Activated B cell treated with CpG ODN at 0.5 μM for 24 hours (primary cell): ENCODE measurements at regions of chr5 and their contacts with region 1.

Region 1: GRCh38 chr5:40486437-40487275 is 193.1 kb upstream of the PTGER4 start:
- DNase-seq: no peak
- ATAC-seq: peak; percentile 38
- H3K4me3 Mint-ChIP-seq: peak overlapping the region; percentile 64
- H3K27ac Mint-ChIP-seq: peak overlapping the region; percentile 87
- H3K4me1 Mint-ChIP-seq: peaks cover 82% of the 10 kb centered on the region
- H3K27me3 Mint-ChIP-seq: no peaks in the 10 kb centered on the region
- CTCF ChIP-seq: no peak

Region 2: GRCh38 chr5:39948867-39949468 is 537.7 kb before region 1 on chr5:
- CTCF ChIA-PET with region 1: no interaction called
- POLR2A ChIA-PET with region 1: no interaction called
- intact Hi-C with region 1: loop called (anchors 5 kb)
- DNase-seq: no peak
- ATAC-seq: peak; percentile 83
- H3K4me3 Mint-ChIP-seq: no peak overlapping the region
- H3K27ac Mint-ChIP-seq: no peak overlapping the region
- H3K4me1 Mint-ChIP-seq: peaks cover 3% of the 10 kb centered on the region
- H3K27me3 Mint-ChIP-seq: no peaks in the 10 kb centered on the region
- CTCF ChIP-seq: no peak

Region 3: GRCh38 chr5:40223884-40224402 is 262.7 kb before region 1 on chr5:
- CTCF ChIA-PET with region 1: no interaction called
- POLR2A ChIA-PET with region 1: interaction called, 3 read pairs
- intact Hi-C with region 1: loop called (anchors 1 kb)
- DNase-seq: no peak
- ATAC-seq: peak; percentile 63
- H3K4me3 Mint-ChIP-seq: peak overlapping the region; percentile 21
- H3K27ac Mint-ChIP-seq: peak overlapping the region; percentile 79
- H3K4me1 Mint-ChIP-seq: peaks cover 45% of the 10 kb centered on the region
- H3K27me3 Mint-ChIP-seq: peaks cover 5% of the 10 kb centered on the region
- CTCF ChIP-seq: no peak

Region 4: GRCh38 chr5:40367255-40367654 is 119.4 kb before region 1 on chr5:
- CTCF ChIA-PET with region 1: no interaction called
- POLR2A ChIA-PET with region 1: no interaction called
- intact Hi-C with region 1: loop called (anchors 1 kb)
- DNase-seq: no peak
- ATAC-seq: peak; percentile 45
- H3K4me3 Mint-ChIP-seq: no peak overlapping the region
- H3K27ac Mint-ChIP-seq: no peak overlapping the region
- H3K4me1 Mint-ChIP-seq: peaks cover 13% of the 10 kb centered on the region
- H3K27me3 Mint-ChIP-seq: no peaks in the 10 kb centered on the region
- CTCF ChIP-seq: no peak

Region 5: GRCh38 chr5:40410231-40410861 is 76.3 kb before region 1 on chr5:
- CTCF ChIA-PET with region 1: interaction called, 3 read pairs
- POLR2A ChIA-PET with region 1: no interaction called
- intact Hi-C with region 1: loop called (anchors 2 kb)
- DNase-seq: no peak
- ATAC-seq: peak; percentile 69
- H3K4me3 Mint-ChIP-seq: peak overlapping the region; percentile 51
- H3K27ac Mint-ChIP-seq: peak overlapping the region; percentile 78
- H3K4me1 Mint-ChIP-seq: peaks cover 44% of the 10 kb centered on the region
- H3K27me3 Mint-ChIP-seq: no peaks in the 10 kb centered on the region
- CTCF ChIP-seq: no peak

Region 6: GRCh38 chr5:40446910-40447309 is 39.7 kb before region 1 on chr5:
- CTCF ChIA-PET with region 1: no interaction called
- POLR2A ChIA-PET with region 1: no interaction called
- intact Hi-C with region 1: no loop called
- DNase-seq: no peak
- ATAC-seq: peak; percentile 21
- H3K4me3 Mint-ChIP-seq: no peak overlapping the region
- H3K27ac Mint-ChIP-seq: no peak overlapping the region
- H3K4me1 Mint-ChIP-seq: peaks cover 8% of the 10 kb centered on the region
- H3K27me3 Mint-ChIP-seq: no peaks in the 10 kb centered on the region
- CTCF ChIP-seq: no peak

Region 7: DNA sequence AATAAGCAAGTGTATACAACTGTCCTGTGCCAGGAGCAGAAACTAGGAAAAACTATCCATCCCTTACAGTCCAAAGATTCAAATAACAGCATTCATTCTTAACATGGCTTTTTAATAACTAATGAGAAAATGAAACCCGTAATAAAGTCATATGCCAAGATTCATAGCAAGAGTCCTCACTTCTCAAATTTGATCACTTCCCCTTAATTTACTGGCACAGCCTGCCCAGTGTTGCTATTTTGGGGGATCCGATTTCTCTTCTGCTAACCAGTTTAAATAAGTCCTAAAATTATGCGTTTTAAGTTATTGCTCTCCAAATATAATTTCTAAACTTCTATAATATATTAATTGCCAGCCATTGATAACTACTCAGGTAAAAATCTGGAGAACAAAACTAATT is 16.1 kb after region 1 on chr5:
- CTCF ChIA-PET with region 1: interaction called, 3 read pairs
- POLR2A ChIA-PET with region 1: interaction called, 11 read pairs
- intact Hi-C with region 1: loop called (anchors 1 kb)
- DNase-seq: no peak
- ATAC-seq: peak; percentile 84
- H3K4me3 Mint-ChIP-seq: no peak overlapping the region
- H3K27ac Mint-ChIP-seq: no peak overlapping the region
- H3K4me1 Mint-ChIP-seq: peaks cover 9% of the 10 kb centered on the region
- H3K27me3 Mint-ChIP-seq: no peaks in the 10 kb centered on the region
- CTCF ChIP-seq: no peak

Region 8: DNA sequence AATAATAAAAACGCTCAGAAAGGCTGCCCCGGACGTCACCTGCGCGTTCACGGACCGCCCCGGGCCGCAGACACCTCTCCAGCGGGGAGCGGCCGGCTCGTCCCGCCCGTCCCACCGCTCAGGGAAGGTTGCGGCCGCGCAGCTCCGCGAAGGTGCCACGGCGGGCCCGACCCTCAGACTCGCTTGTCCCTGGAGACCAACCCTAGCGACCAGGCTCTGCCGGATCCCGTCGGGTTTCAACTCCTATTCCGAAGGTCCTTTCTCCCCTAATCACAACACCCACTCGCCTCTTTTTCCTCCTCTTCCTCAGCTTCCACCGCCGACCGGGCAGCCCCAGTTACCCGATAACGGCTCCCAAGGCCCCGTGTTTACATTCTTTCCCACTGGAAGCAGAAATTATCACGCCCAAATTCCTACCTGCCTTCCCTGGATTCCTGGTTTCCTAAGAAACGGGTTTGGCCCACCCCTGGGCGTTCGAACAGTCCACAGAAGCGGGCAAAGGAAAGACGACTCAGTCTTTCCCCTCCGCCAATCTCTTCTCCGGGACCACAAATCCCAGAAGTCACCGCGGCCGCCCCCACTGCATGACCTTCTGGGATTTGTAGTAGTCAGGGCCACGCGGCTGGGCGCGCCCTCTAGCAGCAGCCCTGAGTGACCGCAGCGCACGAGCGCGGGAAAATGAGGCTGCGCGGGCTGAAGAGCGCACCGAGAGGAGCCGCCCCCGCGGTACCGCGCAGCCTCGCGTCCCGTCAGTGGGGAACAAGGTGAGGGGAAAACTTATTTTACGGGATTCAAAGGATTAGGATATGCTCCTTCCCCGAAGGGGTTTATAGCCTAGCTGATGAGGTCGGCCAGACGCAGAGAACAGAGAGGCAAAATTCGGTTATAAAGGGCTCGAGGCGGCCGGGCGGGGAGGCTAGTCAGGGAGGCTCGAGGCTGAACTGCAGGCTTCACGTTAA is 269.0 kb after region 1 on chr5 and contains the start of gene TTC33:
- CTCF ChIA-PET with region 1: no interaction called
- POLR2A ChIA-PET with region 1: no interaction called
- intact Hi-C with region 1: loop called (anchors 2 kb)
- DNase-seq: peak; percentile 88
- ATAC-seq: peak; percentile 93
- H3K4me3 Mint-ChIP-seq: no peak within 1 kb of the TSS
- H3K27ac Mint-ChIP-seq: no peak within 1 kb of the TSS
- H3K4me1 Mint-ChIP-seq: peaks cover 7% of the 10 kb centered on the region
- H3K27me3 Mint-ChIP-seq: no peaks in the 10 kb centered on the region
- CTCF ChIP-seq: no peak
- total RNA-seq, gene TTC33: 9.0 and 9.2 TPM in 2 replicates

Region 9: DNA sequence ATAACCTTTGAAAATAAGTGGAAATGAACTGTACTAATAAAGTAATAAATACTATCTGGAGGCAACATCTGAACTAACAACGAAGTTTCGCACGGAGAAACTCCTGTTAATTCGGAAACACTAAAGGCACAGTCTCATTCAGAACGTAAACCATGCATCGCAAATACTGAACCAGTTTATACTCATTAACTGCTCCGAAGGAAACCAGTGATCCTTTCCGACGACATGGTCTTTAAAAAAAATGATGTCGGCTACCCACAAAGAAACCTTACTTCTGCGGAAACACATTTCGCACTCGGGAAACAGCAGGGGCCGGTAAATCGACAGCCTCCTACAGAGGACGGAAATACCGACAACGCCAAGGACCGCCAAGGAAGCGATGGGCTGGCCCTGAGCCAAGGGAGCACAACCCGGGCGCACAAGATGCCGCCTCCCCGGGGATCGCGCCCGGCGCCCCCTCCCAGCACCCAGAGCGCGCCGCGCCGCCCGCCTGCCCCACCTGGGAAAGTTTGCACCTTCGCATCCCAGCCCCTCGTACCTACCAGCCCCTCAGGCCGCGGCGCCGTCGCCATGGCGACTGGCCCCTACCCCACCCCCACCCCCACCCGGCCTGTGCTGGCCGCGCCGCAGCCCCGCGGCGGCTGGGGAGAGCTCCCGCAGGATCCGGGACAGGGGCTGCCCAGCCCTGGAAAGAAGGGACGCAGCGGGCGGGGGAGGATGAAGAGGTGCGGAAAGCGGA is 310.8 kb after region 1 on chr5:
- CTCF ChIA-PET with region 1: no interaction called
- POLR2A ChIA-PET with region 1: no interaction called
- intact Hi-C with region 1: no loop called
- DNase-seq: peak; percentile 66
- ATAC-seq: peak; percentile 22
- H3K4me3 Mint-ChIP-seq: peak overlapping the region; percentile 91
- H3K27ac Mint-ChIP-seq: peak overlapping the region; percentile 93
- H3K4me1 Mint-ChIP-seq: peaks cover 44% of the 10 kb centered on the region
- H3K27me3 Mint-ChIP-seq: no peaks in the 10 kb centered on the region
- CTCF ChIP-seq: no peak